ENCODE measurements at regions of chr7 and their contacts with region 1.

Region 1: GRCh38 chr7:5363729-5364128 is 59.9 kb downstream of the TNRC18 start:
- DNase-seq: peak; percentile 33
- H3K4me3 Mint-ChIP-seq: no peak overlapping the region
- H3K27ac Mint-ChIP-seq: no peak overlapping the region
- H3K4me1 Mint-ChIP-seq: peaks cover 16% of the 10 kb centered on the region
- H3K27me3 Mint-ChIP-seq: no peaks in the 10 kb centered on the region

Region 2: GRCh38 chr7:5450549-5451372 is 87.0 kb after region 1 on chr7:
- CTCF ChIA-PET with region 1: interaction called, 5 read pairs
- intact Hi-C with region 1: loop called (anchors 2 kb)
- DNase-seq: peak; percentile 55
- H3K4me3 Mint-ChIP-seq: no peak overlapping the region
- H3K27ac Mint-ChIP-seq: no peak overlapping the region
- H3K4me1 Mint-ChIP-seq: no peaks in the 10 kb centered on the region
- H3K27me3 Mint-ChIP-seq: no peaks in the 10 kb centered on the region